ENCODE measurements at regions of chr11 and their contacts with region 1.

Region 1: GRCh38 chr11:72831513-72832300 is 17.5 kb downstream of the ATG16L2 start:
- DNase-seq: peak; percentile 90
- ATAC-seq: peak; percentile 80

Region 2: GRCh38 chr11:73236854-73237253 is 405.1 kb after region 1 on chr11:
- intact Hi-C with region 1: loop called (anchors 5 kb)
- DNase-seq: peak; percentile 62
- ATAC-seq: peak; percentile 52

Measured in Right ventricle myocardium superior (tissue), 1 donor.